CD8-positive, alpha-beta T cell (primary cell): ENCODE measurements at regions of chr3 and their contacts with region 1.

Region 1: GRCh38 chr3:160565442-160566403 is at the start of gene KPNA4:
- DNase-seq: peak; percentile 94 to 98 (median 96)
- ATAC-seq: peak; percentile 88
- H3K4me3 ChIP-seq: peak within 1 kb of the TSS; percentile 97 to 98
- H3K4me3 Mint-ChIP-seq: peak within 1 kb of the TSS; percentile 99
- H3K27ac ChIP-seq: peak within 1 kb of the TSS; percentile 81 to 93
- H3K27ac Mint-ChIP-seq: peak within 1 kb of the TSS; percentile 97
- H3K4me1 ChIP-seq: peaks cover 40% of the 10 kb centered on the region
- H3K4me1 Mint-ChIP-seq: peaks cover 52% of the 10 kb centered on the region
- H3K27me3 ChIP-seq: no peaks in the 10 kb centered on the region
- H3K27me3 Mint-ChIP-seq: no peaks in the 10 kb centered on the region
- CTCF ChIP-seq: no peak
- total RNA-seq, gene KPNA4: 64.4 to 69.2 TPM

Region 2: DNA sequence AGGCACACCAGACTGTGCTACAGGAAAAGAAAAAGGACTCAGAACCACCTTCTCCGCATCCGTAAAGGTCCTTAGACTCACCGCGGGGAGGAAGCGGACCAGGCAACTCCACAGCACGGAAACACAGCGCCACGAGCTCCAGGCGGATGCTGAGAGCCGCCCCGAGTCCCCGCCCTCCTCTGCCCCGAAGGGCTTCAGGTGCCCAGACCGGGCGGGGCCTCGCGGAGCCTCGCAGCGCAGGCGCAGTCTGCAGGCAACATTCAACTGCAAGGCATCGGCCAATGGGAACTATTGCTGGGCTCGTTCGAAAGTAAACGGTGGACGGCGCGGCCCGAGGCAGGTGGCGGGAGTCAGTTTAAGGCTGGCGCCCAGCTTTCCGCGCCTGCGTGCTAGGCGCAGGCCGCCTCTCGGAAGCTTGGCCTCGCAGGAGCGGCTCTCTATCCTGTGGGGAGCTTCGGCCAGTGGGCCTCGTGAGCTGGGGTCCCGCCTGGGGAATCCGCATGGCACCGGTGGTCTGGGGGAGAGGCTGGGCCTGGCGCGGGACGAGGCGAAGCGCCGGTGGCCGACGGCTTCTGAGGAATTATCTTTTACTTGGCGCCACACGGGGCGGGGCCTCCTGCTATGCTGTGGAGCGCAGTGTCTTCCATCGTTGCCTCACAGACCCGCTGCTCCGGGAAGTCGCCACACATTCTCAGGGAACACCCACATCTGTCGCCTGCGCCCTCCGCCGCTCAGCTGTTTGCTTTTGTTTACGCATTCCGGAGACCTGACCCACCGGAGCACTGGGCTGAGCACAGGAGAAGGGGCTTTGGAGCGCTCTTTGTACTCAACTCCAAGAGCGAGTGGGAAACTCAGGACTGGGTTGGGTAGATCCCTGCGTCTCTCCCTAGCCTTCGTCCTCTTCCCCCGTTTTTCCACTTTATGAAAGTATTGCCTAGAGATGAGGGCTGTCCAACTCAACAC is 115.8 kb before region 1 on chr3 and contains the start of gene TRIM59:
- CTCF ChIA-PET with region 1: interaction called, 3 read pairs
- POLR2A ChIA-PET with region 1: interaction called, 16 read pairs
- intact Hi-C with region 1: loop called (anchors 1 to 5 kb)
- DNase-seq: peak; percentile 92 to 99 (median 95)
- ATAC-seq: peak; percentile 96
- H3K4me3 ChIP-seq: peak within 1 kb of the TSS; percentile 80 to 91
- H3K4me3 Mint-ChIP-seq: peak within 1 kb of the TSS; percentile 95
- H3K27ac ChIP-seq: peak within 1 kb of the TSS; percentile 60 to 85
- H3K27ac Mint-ChIP-seq: peak within 1 kb of the TSS; percentile 93
- H3K4me1 ChIP-seq: peaks cover 22% of the 10 kb centered on the region
- H3K4me1 Mint-ChIP-seq: peaks cover 38% of the 10 kb centered on the region
- H3K27me3 ChIP-seq: no peaks in the 10 kb centered on the region
- H3K27me3 Mint-ChIP-seq: no peaks in the 10 kb centered on the region
- CTCF ChIP-seq: no peak
- total RNA-seq, gene TRIM59: 15.0 to 15.5 TPM

Region 3: DNA sequence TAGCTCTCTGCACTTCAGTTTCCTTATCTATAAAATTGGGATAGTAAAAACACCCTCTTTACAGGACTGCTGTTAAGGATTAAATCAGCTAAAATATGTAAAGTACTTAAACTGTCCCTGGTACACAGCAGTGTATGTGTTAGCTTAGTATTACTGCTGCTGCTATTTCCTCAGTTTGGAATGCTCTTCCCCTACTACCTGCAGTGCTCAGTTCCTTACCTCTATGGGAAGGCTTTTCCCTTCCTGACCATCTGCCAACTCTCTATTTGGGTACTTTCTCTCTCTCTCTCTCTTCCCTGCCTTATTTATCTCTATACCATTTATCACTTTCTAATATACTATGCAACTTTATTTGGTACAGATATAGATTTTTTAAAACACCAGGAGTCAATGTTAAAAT is 26.8 kb before region 1 on chr3:
- CTCF ChIA-PET with region 1: no interaction called
- POLR2A ChIA-PET with region 1: interaction called, 5 read pairs
- intact Hi-C with region 1: loop called in 1 of 2 experiments (anchors 2 kb)
- DNase-seq: no peak
- ATAC-seq: no peak
- H3K4me3 ChIP-seq: no peak overlapping the region
- H3K4me3 Mint-ChIP-seq: no peak overlapping the region
- H3K27ac ChIP-seq: no peak overlapping the region
- H3K27ac Mint-ChIP-seq: peak overlapping the region; percentile 2
- H3K4me1 ChIP-seq: peaks cover 10% of the 10 kb centered on the region
- H3K4me1 Mint-ChIP-seq: peaks cover 55% of the 10 kb centered on the region
- H3K27me3 ChIP-seq: no peaks in the 10 kb centered on the region
- H3K27me3 Mint-ChIP-seq: no peaks in the 10 kb centered on the region
- CTCF ChIP-seq: no peak

Region 4: GRCh38 chr3:160587105-160587504 is 21.4 kb after region 1 on chr3:
- CTCF ChIA-PET with region 1: no interaction called
- POLR2A ChIA-PET with region 1: no interaction called
- intact Hi-C with region 1: no loop called
- DNase-seq: no peak
- ATAC-seq: no peak
- H3K4me3 ChIP-seq: no peak overlapping the region
- H3K4me3 Mint-ChIP-seq: no peak overlapping the region
- H3K27ac ChIP-seq: no peak overlapping the region
- H3K27ac Mint-ChIP-seq: no peak overlapping the region
- H3K4me1 ChIP-seq: no peaks in the 10 kb centered on the region
- H3K4me1 Mint-ChIP-seq: no peaks in the 10 kb centered on the region
- H3K27me3 ChIP-seq: peaks cover 0 to 4% of the 10 kb centered on the region in 2 experiments
- H3K27me3 Mint-ChIP-seq: peaks cover 30% of the 10 kb centered on the region
- CTCF ChIP-seq: no peak

Region 5: GRCh38 chr3:160637081-160637480 is 71.4 kb after region 1 on chr3:
- CTCF ChIA-PET with region 1: no interaction called
- POLR2A ChIA-PET with region 1: no interaction called
- intact Hi-C with region 1: no loop called
- DNase-seq: no peak
- ATAC-seq: no peak
- H3K4me3 ChIP-seq: no peak overlapping the region
- H3K4me3 Mint-ChIP-seq: no peak overlapping the region
- H3K27ac ChIP-seq: no peak overlapping the region
- H3K27ac Mint-ChIP-seq: no peak overlapping the region
- H3K4me1 ChIP-seq: no peaks in the 10 kb centered on the region
- H3K4me1 Mint-ChIP-seq: no peaks in the 10 kb centered on the region
- H3K27me3 ChIP-seq: no peaks in the 10 kb centered on the region
- H3K27me3 Mint-ChIP-seq: no peaks in the 10 kb centered on the region
- CTCF ChIP-seq: no peak

Region 6: GRCh38 chr3:160754855-160755747 is 189.4 kb after region 1 on chr3:
- CTCF ChIA-PET with region 1: no interaction called
- POLR2A ChIA-PET with region 1: interaction called, 3 read pairs
- intact Hi-C with region 1: loop called (anchors 1 to 2 kb)
- DNase-seq: peak; percentile 79 to 95 (median 89)
- ATAC-seq: peak; percentile 85
- H3K4me3 ChIP-seq: peak overlapping the region; percentile 79 to 90
- H3K4me3 Mint-ChIP-seq: peak overlapping the region; percentile 90
- H3K27ac ChIP-seq: peak overlapping the region; percentile 66 to 84
- H3K27ac Mint-ChIP-seq: peak overlapping the region; percentile 75
- H3K4me1 ChIP-seq: peaks cover 26% of the 10 kb centered on the region
- H3K4me1 Mint-ChIP-seq: peaks cover 33% of the 10 kb centered on the region
- H3K27me3 ChIP-seq: no peaks in the 10 kb centered on the region
- H3K27me3 Mint-ChIP-seq: peaks cover 13% of the 10 kb centered on the region
- CTCF ChIP-seq: no peak